ENCODE measurements at regions of chr10 and their contacts with region 1.

Region 1: GRCh38 chr10:96229568-96230030 is 41.8 kb downstream of the BLNK start:
- DNase-seq: peak; percentile 49 to 86
- H3K4me3 ChIP-seq: no peak overlapping the region
- H3K4me1 ChIP-seq: no peaks in the 10 kb centered on the region
- H3K27me3 ChIP-seq: no peaks in the 10 kb centered on the region

Region 2: GRCh38 chr10:96073722-96074121 is 155.9 kb before region 1 on chr10:
- in situ Hi-C with region 1: no loop called
- DNase-seq: no peak
- H3K4me3 ChIP-seq: no peak overlapping the region
- H3K4me1 ChIP-seq: peaks cover 18% of the 10 kb centered on the region
- H3K27me3 ChIP-seq: no peaks in the 10 kb centered on the region

Region 3: DNA sequence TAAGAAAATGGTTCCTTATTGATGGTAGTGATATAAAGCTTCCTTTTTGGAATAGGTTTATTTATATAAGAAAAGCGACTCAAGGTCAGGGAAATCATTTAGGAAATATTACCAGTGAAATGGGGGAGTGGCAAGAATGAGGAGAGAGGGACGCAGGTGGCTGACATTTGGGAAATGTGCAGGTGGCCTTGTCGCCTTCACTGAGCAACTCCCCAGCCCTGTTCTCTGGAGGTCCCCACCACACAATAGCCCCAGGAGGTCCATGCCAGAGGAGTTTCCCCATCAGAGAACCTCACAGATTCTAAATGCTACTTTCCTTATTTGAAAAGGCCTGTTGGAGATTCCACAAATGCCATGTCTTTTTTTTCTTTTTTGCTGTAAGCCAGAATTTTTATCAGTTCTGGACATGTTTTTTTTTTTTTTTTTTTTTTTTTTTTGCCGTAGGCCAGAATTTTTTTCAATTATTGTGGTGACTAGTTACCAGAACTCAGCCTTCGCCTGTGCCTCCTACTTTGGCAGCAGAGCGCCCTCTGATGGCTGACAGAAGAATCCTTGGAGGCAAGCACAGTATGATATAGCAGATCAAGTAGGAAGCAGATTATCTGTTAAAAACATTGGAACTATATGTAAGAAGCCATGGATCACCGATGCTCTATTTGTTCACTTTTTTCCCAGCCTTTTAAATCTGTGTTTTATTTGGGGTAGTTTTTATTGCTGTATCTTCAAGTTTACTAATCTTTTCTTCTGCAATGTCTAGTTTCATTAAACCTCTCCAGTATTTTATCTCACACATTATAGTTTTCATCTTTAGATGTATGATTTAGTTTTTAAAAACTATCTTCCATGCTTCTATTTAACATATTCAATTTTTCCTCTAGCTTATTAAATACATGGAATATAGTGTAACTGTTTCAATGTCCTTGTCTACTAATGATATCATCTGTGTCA is 110.6 kb after region 1 on chr10:
- in situ Hi-C with region 1: loop called (anchors 10 kb)
- DNase-seq: peak; percentile 48 to 79
- H3K4me3 ChIP-seq: no peak overlapping the region
- H3K4me1 ChIP-seq: no peaks in the 10 kb centered on the region
- H3K27me3 ChIP-seq: no peaks in the 10 kb centered on the region